Lower leg skin (tissue), 4 donors: ENCODE measurements at regions of chr18 and their contacts with region 1.

Region 1: DNA sequence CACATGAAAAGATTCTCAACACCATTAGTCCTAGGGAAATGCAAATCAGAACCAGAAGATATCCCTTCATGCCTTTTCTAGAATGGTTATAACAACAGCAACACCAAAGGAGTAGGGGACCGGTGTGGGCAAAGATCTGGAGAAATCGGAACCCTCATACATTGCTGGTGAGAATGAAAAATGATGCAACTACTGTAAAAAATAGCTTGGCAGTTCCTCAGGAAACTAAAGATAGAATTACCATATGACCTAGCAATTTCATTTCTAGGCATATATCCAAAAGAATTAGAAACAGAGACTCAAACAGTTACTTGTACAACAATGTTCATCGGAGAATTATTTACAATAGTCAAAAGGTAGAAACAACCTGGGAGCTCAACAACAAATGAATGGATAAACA is 29.2 kb upstream of the CDH7 start:
- DNase-seq: no peak
- H3K4me3 ChIP-seq: no peak overlapping the region
- CTCF ChIP-seq: no peak
- POLR2A ChIP-seq: no peak

Region 2: GRCh38 chr18:65380986-65381385 is 340.6 kb before region 1 on chr18:
- intact Hi-C with region 1: no loop called
- DNase-seq: no peak
- H3K4me3 ChIP-seq: no peak overlapping the region
- CTCF ChIP-seq: no peak
- POLR2A ChIP-seq: no peak

Region 3: GRCh38 chr18:65737471-65737955 is 15.9 kb after region 1 on chr18:
- intact Hi-C with region 1: loop called (anchors 2 kb)
- DNase-seq: no peak
- H3K4me3 ChIP-seq: no peak overlapping the region
- CTCF ChIP-seq: no peak
- POLR2A ChIP-seq: no peak

Region 4: GRCh38 chr18:66734451-66734850 is 1012.8 kb after region 1 on chr18:
- intact Hi-C with region 1: no loop called
- DNase-seq: no peak
- H3K4me3 ChIP-seq: no peak overlapping the region
- CTCF ChIP-seq: no peak
- POLR2A ChIP-seq: no peak